ENCODE measurements at regions of chr6 and their contacts with region 1.

Region 1: DNA sequence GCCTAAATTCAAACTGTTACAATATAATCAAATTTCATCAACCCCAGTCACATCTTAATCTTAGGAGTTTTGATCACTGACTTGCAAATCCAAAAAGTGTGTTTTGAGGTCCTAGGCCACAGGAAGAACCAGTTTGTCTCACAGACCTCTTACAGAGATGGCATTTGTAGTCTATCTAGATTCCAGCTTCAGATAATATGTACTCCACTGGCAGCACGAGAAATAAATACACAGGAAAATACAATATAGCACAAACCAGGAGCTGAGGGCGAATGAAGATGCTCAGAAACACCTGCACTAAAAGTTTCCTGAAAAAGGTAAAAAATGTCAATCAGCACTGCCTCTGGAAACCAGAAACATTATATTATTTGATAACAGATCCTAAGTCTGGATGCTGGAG is 647 bp upstream of the BTN3A3 start:
- DNase-seq: no peak
- ATAC-seq: no peak
- H3K4me3 Mint-ChIP-seq: peak overlapping the region; percentile 96
- H3K27ac Mint-ChIP-seq: peak overlapping the region; percentile 98
- H3K4me1 Mint-ChIP-seq: peaks cover 40% of the 10 kb centered on the region
- H3K27me3 Mint-ChIP-seq: no peaks in the 10 kb centered on the region

Region 2: GRCh38 chr6:26223650-26224546 is 215.8 kb before region 1 on chr6:
- CTCF ChIA-PET with region 1: no interaction called
- POLR2A ChIA-PET with region 1: no interaction called
- intact Hi-C with region 1: no loop called
- DNase-seq: peak; percentile 79
- ATAC-seq: peak; percentile 86
- H3K4me3 Mint-ChIP-seq: no peak overlapping the region
- H3K27ac Mint-ChIP-seq: no peak overlapping the region
- H3K4me1 Mint-ChIP-seq: peaks cover 8% of the 10 kb centered on the region
- H3K27me3 Mint-ChIP-seq: no peaks in the 10 kb centered on the region

Region 3: GRCh38 chr6:26366504-26366903 is 73.2 kb before region 1 on chr6:
- CTCF ChIA-PET with region 1: no interaction called
- POLR2A ChIA-PET with region 1: no interaction called
- intact Hi-C with region 1: loop called in 1 of 2 experiments (anchors 1 kb)
- DNase-seq: no peak
- ATAC-seq: no peak
- H3K4me3 Mint-ChIP-seq: no peak overlapping the region
- H3K27ac Mint-ChIP-seq: peak overlapping the region; percentile 61
- H3K4me1 Mint-ChIP-seq: peaks cover 58% of the 10 kb centered on the region
- H3K27me3 Mint-ChIP-seq: no peaks in the 10 kb centered on the region

Region 4: DNA sequence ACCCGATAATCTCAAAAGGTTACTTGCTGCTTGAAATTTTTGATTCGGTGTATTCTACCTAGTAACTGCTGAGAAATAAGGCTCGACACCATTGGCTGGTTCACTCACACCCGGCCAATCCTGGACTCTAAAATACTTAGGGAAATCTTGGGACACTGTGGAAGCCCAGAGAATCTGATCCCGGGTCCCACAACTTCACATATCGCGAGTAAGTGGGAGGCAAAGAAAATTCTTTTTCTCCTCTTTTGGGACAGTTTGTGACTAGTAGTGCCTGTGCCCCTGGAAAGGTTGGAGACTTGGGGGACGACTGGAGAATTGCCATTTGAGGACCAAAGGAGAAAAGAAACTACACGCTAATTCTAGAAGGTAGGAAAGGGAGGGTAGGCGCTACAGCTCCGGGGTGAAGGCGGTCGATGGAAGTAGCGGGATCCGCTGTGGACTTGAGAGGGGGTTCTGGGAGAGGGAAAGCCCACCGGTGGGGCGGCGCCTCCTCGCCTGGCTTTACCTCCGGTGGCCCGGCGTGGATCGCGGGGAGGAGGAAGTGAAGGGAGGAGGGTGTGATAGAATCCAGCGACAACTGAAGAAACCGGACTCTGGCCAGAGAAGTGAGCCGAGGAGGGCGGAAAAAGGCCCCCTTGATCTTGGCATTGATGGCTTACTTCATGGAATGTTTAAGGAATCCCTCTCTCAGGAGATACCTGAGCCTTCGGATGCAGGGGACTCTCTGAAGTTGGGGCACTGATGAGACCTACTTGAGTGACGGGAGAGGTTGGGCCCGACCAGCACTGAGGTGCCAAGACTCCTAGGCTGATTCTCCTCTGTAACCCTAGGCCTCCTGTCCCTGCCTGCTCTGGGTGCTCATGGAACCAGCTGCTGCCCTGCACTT is 18.2 kb before region 1 on chr6:
- CTCF ChIA-PET with region 1: interaction called, 4 read pairs
- POLR2A ChIA-PET with region 1: no interaction called
- intact Hi-C with region 1: loop called in 1 of 2 experiments (anchors 1 kb)
- DNase-seq: peak; percentile 62
- ATAC-seq: peak; percentile 97
- H3K4me3 Mint-ChIP-seq: no peak overlapping the region
- H3K27ac Mint-ChIP-seq: no peak overlapping the region
- H3K4me1 Mint-ChIP-seq: peaks cover 5% of the 10 kb centered on the region
- H3K27me3 Mint-ChIP-seq: no peaks in the 10 kb centered on the region

Region 5: GRCh38 chr6:26457806-26458688 is 18.4 kb after region 1 on chr6 and contains the start of gene BTN2A1:
- CTCF ChIA-PET with region 1: interaction called, 13 read pairs
- POLR2A ChIA-PET with region 1: no interaction called
- intact Hi-C with region 1: loop called (anchors 1 to 2 kb)
- DNase-seq: peak; percentile 76
- ATAC-seq: peak; percentile 99
- H3K4me3 Mint-ChIP-seq: peak within 1 kb of the TSS; percentile 87
- H3K27ac Mint-ChIP-seq: peak within 1 kb of the TSS; percentile 97
- H3K4me1 Mint-ChIP-seq: peaks cover 45% of the 10 kb centered on the region
- H3K27me3 Mint-ChIP-seq: no peaks in the 10 kb centered on the region
- total RNA-seq, gene BTN2A1: 17.3 to 17.5 TPM

Region 6: DNA sequence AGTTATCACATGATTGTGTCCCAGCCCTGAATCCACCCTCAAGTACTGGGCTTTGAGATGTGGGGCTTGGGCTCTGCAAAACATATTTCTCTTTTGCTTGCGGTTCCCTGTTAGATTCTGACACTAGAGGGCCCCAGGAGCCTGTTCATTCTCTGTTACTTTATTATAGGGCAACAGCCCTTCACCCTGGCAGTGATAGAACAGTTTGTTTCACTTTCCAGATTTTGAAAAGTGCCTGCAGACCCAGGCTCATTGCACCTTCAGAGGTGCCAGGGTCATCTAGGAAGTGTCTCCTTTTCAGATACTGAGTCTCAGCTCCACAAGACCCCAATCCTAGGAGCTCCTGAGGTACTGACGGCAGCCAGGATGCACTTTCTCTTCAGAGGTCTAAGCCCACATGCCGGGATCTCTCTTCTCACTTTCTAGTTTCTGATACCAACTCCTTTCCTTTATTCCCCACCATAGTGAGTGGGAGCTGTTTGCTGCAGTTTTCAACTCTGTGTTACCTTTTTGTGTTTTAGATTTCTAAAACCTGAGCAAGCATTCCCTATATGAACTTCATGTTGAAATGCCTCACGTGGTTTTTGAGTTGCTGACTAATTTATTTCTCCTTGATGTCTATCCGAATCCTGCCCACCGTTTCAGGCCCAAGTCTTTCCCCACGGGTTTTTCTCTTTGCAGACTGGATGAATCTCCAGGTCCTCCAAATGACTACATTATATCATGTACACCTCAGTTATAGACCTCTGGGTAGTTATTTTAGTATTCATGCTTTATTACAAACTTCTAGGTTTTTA is 168.0 kb after region 1 on chr6:
- CTCF ChIA-PET with region 1: no interaction called
- POLR2A ChIA-PET with region 1: no interaction called
- intact Hi-C with region 1: no loop called
- DNase-seq: peak; percentile 74
- ATAC-seq: peak; percentile 91
- H3K4me3 Mint-ChIP-seq: peak overlapping the region; percentile 50
- H3K27ac Mint-ChIP-seq: peak overlapping the region; percentile 59
- H3K4me1 Mint-ChIP-seq: peaks cover 26% of the 10 kb centered on the region
- H3K27me3 Mint-ChIP-seq: no peaks in the 10 kb centered on the region

Measured in activated CD4-positive, alpha-beta T cell treated with anti-CD3 and anti-CD28 coated beads for 36 hours (primary cell).